Breast epithelium (tissue), 4 donors: ENCODE measurements at regions of chr19 and their contacts with region 1.

Region 1: DNA sequence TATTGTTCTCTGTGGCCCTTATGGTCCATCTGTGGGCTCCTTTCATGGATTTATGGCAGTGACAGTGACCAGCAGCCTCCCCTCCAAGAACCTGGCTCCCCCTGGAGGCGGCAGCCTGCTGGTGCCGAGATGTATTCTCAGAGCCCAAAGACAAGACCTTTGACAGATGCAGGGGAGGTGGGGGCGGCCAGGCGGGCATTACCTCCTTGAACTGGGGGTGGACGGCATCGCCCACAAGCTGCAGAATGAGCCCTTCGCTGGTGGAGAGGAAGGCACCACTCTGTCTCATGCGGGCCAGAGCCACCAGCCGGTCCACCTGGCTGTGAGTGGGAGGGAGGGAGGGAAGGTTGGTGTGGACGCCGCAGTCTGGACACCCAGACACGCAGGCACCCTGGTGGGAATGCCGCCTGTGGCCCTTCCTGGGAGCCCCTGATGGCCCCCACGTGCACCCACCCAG is 6.6 kb downstream of the ISOC2 start:
- DNase-seq: no peak
- H3K4me3 ChIP-seq: no peak overlapping the region
- H3K27ac ChIP-seq: no peak overlapping the region
- H3K4me1 ChIP-seq: peaks cover 0 to 15% of the 10 kb centered on the region in 2 donors
- H3K27me3 ChIP-seq: peaks cover 12 to 22% of the 10 kb centered on the region in 2 donors
- CTCF ChIP-seq: peak in 1 of 3 donors; percentile 33
- POLR2A ChIP-seq: no peak

Region 2: GRCh38 chr19:56383826-56384605 is 929.2 kb after region 1 on chr19:
- intact Hi-C with region 1: loop called (anchors 5 kb)
- DNase-seq: no peak
- H3K4me3 ChIP-seq: no peak overlapping the region
- H3K27ac ChIP-seq: no peak overlapping the region
- H3K4me1 ChIP-seq: no peaks in the 10 kb centered on the region
- H3K27me3 ChIP-seq: no peaks in the 10 kb centered on the region
- CTCF ChIP-seq: no peak
- POLR2A ChIP-seq: no peak